Posterior vena cava (tissue), 2 donors: ENCODE measurements at regions of chr5 and their contacts with region 1.

Region 1: GRCh38 chr5:145396890-145397289 is 438.3 kb downstream of the PRELID2 start:
- DNase-seq: no peak

Region 2: GRCh38 chr5:143738417-143739401 is 1658.2 kb before region 1 on chr5:
- intact Hi-C with region 1: no loop called
- DNase-seq: no peak

Region 3: DNA sequence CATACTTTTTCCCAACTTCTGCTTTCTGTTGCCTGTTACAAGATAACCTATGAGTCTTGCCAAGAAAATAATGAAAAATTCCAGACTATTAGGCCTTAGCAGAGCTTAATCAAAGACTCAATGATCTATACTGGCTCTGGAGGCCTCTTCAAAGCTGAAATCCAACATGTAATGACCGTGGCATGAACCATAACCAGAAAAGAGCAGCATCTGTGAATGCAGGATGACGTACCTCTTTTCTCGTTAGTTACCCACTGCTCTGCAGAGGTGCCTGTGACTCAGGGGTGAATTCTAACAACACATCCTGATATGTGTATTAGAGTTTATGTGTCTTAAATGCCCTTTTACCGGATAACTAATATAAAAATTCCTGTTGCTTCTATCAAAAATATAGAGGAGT is 207.1 kb before region 1 on chr5:
- intact Hi-C with region 1: no loop called
- DNase-seq: no peak

Region 4: GRCh38 chr5:145510324-145510723 is 113.4 kb after region 1 on chr5:
- intact Hi-C with region 1: loop called in 1 of 2 experiments (anchors 2 kb)
- DNase-seq: no peak